ENCODE measurements at regions of chr4 and their contacts with region 1.

Region 1: DNA sequence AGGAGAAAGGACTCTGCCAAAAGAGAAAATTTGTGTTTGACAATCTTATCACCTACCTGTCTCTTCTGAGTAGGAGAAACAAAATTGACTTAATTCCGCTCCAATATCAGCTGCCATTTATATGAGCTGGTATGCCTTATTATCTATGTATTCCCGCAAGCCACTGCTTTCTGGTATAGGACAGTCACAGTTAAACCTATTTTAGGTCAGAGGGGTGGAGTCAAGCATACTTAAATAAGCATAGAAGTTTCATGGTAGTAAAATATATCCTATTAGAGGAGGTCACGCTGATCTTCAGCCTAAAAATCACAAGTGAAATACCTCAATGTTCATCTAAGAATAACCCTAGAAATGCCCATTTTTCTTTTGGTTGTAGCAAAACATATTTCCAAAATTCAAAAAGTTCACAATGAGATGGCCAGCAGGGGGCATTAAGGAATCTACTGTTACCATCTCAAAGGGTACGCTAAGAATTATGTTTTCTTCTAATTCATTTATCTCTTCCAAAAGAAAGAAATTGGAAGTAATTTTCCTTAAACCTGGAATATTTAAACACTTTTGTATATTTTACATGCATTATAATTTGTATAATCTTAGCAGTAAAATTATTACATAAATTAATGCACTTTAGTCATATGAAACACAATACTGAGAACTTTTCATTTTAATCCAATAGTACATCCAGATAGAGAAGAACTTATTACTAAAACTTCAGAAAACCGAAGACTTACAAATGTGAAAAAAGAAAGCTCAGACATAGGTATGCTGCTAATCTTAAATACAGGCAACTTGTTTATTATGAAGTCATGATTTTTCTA is 10.5 kb downstream of the PPAT start:
- DNase-seq: no peak
- H3K4me3 ChIP-seq: no peak overlapping the region
- H3K27ac ChIP-seq: no peak overlapping the region
- H3K4me1 ChIP-seq: no peaks in the 10 kb centered on the region
- H3K27me3 ChIP-seq: no peaks in the 10 kb centered on the region
- CTCF ChIP-seq: peak; percentile 59 to 63

Region 2: GRCh38 chr4:56467284-56468096 is 42.6 kb after region 1 on chr4 and contains the start of gene SRP72:
- CTCF ChIA-PET with region 1: interaction called, 3 read pairs
- dilution Hi-C with region 1: no loop called
- in situ Hi-C with region 1: no loop called
- intact Hi-C with region 1: loop called (anchors 5 kb)
- DNase-seq: peak; percentile 86
- H3K4me3 ChIP-seq: peak within 1 kb of the TSS; percentile 74 to 100 (median 99)
- H3K27ac ChIP-seq: peak within 1 kb of the TSS; percentile 99
- H3K4me1 ChIP-seq: peaks cover 10% of the 10 kb centered on the region
- H3K27me3 ChIP-seq: no peaks in the 10 kb centered on the region
- CTCF ChIP-seq: no peak
- total RNA-seq, gene SRP72: 91.2 to 190 TPM

Region 3: DNA sequence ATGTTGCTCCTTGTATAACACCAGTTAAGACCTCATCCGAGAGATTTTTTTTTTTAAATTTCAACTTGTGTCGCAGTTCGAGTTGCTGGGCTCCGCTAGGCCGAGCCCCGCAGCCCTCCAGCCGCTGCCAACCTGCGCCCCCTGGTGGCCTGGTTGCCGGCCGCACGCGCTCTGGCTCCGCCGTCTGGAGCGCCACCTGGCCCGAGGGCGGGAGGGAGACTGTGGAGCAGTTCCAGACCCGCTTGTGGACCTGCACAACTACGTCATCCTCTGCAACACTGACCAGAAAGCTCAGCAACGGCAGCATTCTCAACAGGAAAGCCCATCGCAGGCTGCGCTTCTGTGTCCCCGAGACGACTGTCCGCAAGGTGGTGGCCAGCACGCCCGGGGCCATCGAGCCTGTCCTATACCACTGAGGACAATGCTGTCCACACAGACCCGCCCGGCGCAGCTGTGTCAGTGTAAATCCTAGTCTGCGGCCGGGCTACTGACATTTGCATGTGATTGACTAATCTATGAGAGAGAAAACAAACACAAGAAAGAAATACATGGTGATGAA is 119.7 kb after region 1 on chr4:
- CTCF ChIA-PET with region 1: no interaction called
- dilution Hi-C with region 1: no loop called
- in situ Hi-C with region 1: no loop called
- intact Hi-C with region 1: loop called (anchors 1 kb)
- DNase-seq: peak; percentile 70
- H3K4me3 ChIP-seq: peak overlapping the region; percentile 29 to 52 (median 46)
- H3K27ac ChIP-seq: no peak overlapping the region
- H3K4me1 ChIP-seq: no peaks in the 10 kb centered on the region
- H3K27me3 ChIP-seq: no peaks in the 10 kb centered on the region
- CTCF ChIP-seq: peak; percentile 83 to 99